ENCODE measurements at regions of chr11 and their contacts with region 1.

Region 1: DNA sequence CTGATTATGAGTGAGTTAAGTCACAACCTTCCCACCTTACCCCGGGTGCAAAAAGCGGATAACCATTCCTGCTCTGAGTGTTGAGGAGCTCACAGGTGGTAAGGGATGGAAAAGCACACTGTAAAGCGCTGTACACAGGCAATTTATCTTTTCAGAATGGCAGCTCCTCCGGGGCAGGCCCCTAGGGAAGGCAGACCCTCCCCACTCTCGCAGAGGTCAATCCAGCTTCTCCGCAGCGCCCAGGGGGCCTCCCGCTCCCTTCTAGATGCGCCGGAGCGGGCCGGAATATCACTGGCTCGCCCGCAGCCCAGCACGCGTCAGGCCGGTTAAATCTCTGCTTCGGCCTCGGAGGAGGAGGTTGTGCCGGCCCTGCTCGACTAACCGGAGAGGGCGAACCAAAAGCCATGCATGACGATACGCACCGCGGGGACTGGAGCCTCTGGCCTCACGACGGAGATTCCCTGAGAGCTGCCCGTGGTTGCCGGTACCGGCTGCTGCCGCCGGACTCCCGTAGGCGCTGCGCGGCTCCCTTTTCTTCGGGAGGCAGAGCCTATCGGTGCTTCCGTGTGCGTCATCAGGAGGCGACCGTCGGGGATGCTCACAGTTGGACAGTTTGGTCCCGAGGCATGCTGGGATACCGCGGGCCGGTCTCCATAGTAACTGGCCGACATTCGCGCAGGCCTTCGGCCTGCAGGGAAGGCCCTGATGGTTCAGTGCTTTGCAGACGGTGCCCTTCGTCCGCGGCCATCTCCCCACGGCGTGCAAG is at the start of gene BRMS1:
- DNase-seq: peak; percentile 87 to 98 (median 92)
- ATAC-seq: peak; percentile 87
- H3K4me3 ChIP-seq: peak within 1 kb of the TSS; percentile 81
- H3K27ac ChIP-seq: peak within 1 kb of the TSS; percentile 65
- H3K4me1 ChIP-seq: peaks cover 19 to 37% of the 10 kb centered on the region in 2 experiments
- H3K27me3 ChIP-seq: no peaks in the 10 kb centered on the region
- CTCF ChIP-seq: peak; percentile 11 to 25 (median 18); a peak in 3 of 6 replicates
- EP300 ChIP-seq: peak; percentile 73
- POLR2A ChIP-seq: peak; percentile 90
- RAD21 ChIP-seq: no peak
- polyA plus RNA-seq, gene BRMS1: 2.2 to 4.5 TPM

Region 2: GRCh38 chr11:66363805-66364535 is 19.2 kb after region 1 on chr11:
- CTCF ChIA-PET with region 1: no interaction called
- POLR2A ChIA-PET with region 1: interaction called, 16 read pairs
- in situ Hi-C with region 1: no loop called
- intact Hi-C with region 1: no loop called
- DNase-seq: peak; percentile 85 to 89 (median 86)
- ATAC-seq: peak; percentile 83
- H3K4me3 ChIP-seq: no peak overlapping the region
- H3K27ac ChIP-seq: no peak overlapping the region
- H3K4me1 ChIP-seq: peaks cover 0 to 38% of the 10 kb centered on the region in 2 experiments; a peak in 4 of 5 replicates
- H3K27me3 ChIP-seq: no peaks in the 10 kb centered on the region
- CTCF ChIP-seq: peak; percentile 83 to 85 (median 85)
- EP300 ChIP-seq: no peak
- POLR2A ChIP-seq: peak; percentile 47; the same call in 1 of the 2 replicates
- RAD21 ChIP-seq: peak in 1 of 2 experiments; percentile 38; a peak in 1 of 4 replicates

Region 3: GRCh38 chr11:66371627-66372415 is 27.1 kb after region 1 on chr11 and contains the start of gene SLC29A2:
- CTCF ChIA-PET with region 1: no interaction called
- POLR2A ChIA-PET with region 1: interaction called, 6 read pairs
- in situ Hi-C with region 1: no loop called
- intact Hi-C with region 1: loop called (anchors 1 kb)
- DNase-seq: peak; percentile 95 to 97 (median 96)
- ATAC-seq: peak; percentile 93
- H3K4me3 ChIP-seq: peak within 1 kb of the TSS; percentile 93
- H3K27ac ChIP-seq: peak within 1 kb of the TSS; percentile 99
- H3K4me1 ChIP-seq: peaks cover 21 to 47% of the 10 kb centered on the region in 2 experiments; a peak in 4 of 5 replicates
- H3K27me3 ChIP-seq: no peaks in the 10 kb centered on the region
- CTCF ChIP-seq: no peak
- EP300 ChIP-seq: no peak
- POLR2A ChIP-seq: peak; percentile 84; the same call in 1 of the 2 replicates
- RAD21 ChIP-seq: no peak
- polyA plus RNA-seq, gene SLC29A2: 2.4 to 2.5 TPM